ENCODE measurements at regions of chr10 and their contacts with region 1.

Region 1: DNA sequence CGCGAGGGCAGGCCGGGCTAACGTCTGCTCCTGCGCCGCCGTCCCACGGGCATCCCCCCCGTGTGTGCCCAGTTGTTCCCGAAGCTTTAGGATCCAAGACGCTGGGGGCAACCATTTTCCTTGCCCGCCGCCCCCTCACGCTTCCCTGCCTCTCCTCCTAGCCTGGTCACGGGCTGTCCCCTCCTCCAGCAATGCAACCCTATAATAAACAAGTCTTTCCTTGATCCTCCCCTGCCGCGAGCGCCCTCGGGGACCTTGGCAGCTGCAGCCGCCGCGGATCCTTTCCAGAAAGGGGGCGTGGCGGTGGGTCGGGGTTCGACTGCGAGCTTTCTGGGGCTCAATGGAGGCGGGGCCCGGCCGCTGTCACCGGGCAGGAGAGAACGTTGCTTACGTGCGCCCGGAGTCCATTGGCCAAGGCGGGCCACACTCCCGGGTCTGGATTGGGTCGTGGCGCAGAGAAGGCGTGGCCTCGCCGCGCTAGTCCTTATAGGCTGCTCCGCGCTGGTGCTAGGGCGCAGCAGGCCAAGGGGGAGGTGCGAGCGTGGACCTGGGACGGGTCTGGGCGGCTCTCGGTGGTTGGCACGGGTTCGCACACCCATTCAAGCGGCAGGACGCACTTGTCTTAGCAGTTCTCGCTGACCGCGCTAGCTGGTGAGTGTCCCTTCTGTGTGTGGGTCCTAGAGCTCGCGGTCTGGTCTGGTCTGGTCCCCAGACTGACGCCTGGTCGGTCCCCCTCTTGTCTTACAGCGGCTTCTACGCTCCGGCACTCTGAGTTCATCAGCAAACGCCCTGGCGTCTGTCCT is at the start of gene DDIT4:
- DNase-seq: peak; percentile 94
- ATAC-seq: peak; percentile 91
- H3K4me3 ChIP-seq: peak within 1 kb of the TSS; percentile 93 to 99
- H3K27ac ChIP-seq: peak within 1 kb of the TSS; percentile 91
- H3K4me1 ChIP-seq: peaks cover 40% of the 10 kb centered on the region
- H3K27me3 ChIP-seq: no peaks in the 10 kb centered on the region
- CTCF ChIP-seq: no peak
- total RNA-seq, gene DDIT4: 157 TPM

Region 2: GRCh38 chr10:72309290-72310240 is 36.0 kb after region 1 on chr10:
- CTCF ChIA-PET with region 1: no interaction called
- POLR2A ChIA-PET with region 1: interaction called, 3 read pairs
- in situ Hi-C with region 1: loop called (anchors 5 kb)
- intact Hi-C with region 1: no loop called
- DNase-seq: no peak
- ATAC-seq: peak; percentile 19
- H3K4me3 ChIP-seq: no peak overlapping the region
- H3K27ac ChIP-seq: peak overlapping the region; percentile 87
- H3K4me1 ChIP-seq: peaks cover 37% of the 10 kb centered on the region
- H3K27me3 ChIP-seq: no peaks in the 10 kb centered on the region
- CTCF ChIP-seq: no peak

Region 3: GRCh38 chr10:72331601-72332422 is 58.2 kb after region 1 on chr10:
- CTCF ChIA-PET with region 1: interaction called, 8 read pairs
- POLR2A ChIA-PET with region 1: interaction called, 3 read pairs
- in situ Hi-C with region 1: no loop called
- intact Hi-C with region 1: loop called (anchors 2 kb)
- DNase-seq: no peak
- ATAC-seq: peak; percentile 63
- H3K4me3 ChIP-seq: no peak overlapping the region
- H3K27ac ChIP-seq: peak overlapping the region; percentile 88
- H3K4me1 ChIP-seq: peaks cover 66% of the 10 kb centered on the region
- H3K27me3 ChIP-seq: no peaks in the 10 kb centered on the region
- CTCF ChIP-seq: no peak